ENCODE measurements at regions of chr3 and their contacts with region 1.

Region 1: DNA sequence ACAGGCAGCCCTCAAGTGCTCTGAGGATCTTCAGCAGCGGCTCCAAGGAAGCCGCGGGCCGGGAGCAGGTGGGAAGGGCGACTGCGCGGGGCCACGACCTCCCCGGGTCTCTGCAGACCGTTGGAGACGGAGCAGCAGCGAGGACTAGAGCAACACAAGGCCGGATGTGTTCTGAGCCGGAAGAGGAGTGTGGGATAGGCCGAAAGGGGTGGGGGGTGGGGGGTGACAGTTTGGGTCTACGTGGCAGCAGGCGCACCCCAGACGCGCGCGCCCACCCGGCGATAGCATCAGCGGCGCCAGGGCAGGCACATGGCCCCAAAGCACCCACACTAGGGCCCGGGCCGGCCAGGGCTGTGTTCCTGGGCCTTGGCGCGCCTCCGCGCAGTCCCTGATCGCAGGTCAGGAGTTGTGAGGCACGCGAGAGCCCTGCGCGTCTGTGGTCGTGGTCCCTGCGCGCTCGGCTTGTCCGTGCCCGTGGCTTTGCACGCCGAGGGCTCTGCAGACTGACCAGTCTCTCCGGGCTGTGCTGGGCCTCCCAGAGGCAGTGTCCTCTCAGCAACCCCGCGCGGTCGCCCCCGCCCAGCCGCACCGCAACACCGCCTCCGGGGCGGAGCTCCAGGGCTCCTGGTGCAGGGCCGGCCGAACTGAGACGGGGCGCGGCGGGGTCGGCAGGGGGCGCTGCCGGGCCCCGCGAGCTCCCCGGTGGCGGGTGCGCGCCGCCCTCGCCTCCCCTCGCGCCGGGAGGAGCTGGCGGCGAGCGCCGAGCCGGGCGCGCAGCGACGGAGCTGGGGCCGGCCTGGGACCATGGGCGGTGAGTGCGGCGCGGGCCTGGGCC is at the start of gene PXYLP1:
- DNase-seq: peak; percentile 96
- ATAC-seq: peak; percentile 95 to 97
- total RNA-seq, gene PXYLP1: 5.6 to 10.8 TPM

Region 2: DNA sequence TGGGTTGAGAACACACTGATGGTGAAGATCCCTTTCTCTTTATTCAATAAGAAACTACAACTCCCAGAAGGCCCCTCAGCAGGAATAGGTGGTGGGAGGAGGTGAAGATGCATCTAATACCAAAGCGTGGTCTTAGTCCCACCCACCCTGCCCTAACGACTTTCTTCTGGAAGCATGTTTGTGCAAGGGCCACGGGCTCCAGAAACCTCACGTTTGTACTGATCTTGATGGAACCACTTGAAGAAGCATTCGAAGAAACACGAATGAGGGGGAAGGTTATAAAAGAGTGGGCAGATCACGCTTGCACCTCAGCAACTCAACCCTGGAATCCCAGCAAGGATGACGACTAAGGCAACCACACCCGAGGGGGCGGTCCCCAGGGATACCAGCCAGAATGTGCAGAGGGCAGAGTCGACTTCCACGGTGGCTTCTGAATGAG is 300.3 kb before region 1 on chr3:
- intact Hi-C with region 1: no loop called
- DNase-seq: no peak
- ATAC-seq: peak in 1 of 2 donors; percentile 38

Region 3: DNA sequence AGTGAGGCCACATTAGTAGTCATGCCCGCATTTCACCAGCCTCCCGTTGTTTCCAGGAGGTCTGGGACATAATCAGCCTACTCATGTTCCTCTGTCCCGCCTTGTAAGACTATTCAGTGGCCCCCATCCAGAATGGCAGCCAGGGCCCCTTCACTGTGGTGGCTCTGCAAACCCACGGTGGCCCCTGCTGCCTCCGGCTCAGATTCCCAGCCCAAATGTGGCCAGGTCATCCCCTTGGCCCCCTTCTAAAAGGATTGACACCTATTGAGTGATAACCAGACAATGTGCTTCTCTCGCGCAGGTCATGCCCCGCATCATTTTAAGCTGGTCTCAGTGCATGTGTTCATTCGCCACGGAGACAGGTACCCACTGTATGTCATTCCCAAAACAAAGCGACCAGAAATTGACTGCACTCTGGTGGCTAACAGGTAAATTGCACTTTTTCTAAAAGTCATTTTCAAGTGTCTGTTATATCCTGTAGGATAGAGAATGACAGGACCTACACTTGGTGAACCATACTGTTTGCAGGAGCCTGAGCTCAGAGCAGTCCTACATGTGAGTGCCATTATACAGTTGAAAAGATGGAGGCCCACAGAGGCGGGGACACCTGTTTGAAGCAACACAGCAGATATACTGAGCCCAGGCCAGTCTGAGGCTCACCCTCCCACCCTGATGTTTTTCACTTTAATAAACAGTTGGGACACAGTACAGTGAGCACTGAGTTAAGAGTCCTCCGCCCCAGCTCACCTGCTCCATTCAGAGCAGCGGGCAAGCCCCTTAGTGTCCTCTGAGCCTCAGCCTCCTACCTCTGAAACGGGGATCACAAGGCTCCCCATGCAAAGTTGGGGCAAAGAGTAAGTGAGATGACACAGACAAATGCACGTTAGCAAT is 48.0 kb after region 1 on chr3:
- intact Hi-C with region 1: loop called (anchors 5 kb)
- DNase-seq: no peak
- ATAC-seq: peak; percentile 27 to 69

Region 4: GRCh38 chr3:141303481-141304223 is 72.3 kb after region 1 on chr3:
- intact Hi-C with region 1: loop called in 1 of 2 experiments (anchors 2 kb)
- DNase-seq: no peak
- ATAC-seq: peak; percentile 64 to 72

Region 5: DNA sequence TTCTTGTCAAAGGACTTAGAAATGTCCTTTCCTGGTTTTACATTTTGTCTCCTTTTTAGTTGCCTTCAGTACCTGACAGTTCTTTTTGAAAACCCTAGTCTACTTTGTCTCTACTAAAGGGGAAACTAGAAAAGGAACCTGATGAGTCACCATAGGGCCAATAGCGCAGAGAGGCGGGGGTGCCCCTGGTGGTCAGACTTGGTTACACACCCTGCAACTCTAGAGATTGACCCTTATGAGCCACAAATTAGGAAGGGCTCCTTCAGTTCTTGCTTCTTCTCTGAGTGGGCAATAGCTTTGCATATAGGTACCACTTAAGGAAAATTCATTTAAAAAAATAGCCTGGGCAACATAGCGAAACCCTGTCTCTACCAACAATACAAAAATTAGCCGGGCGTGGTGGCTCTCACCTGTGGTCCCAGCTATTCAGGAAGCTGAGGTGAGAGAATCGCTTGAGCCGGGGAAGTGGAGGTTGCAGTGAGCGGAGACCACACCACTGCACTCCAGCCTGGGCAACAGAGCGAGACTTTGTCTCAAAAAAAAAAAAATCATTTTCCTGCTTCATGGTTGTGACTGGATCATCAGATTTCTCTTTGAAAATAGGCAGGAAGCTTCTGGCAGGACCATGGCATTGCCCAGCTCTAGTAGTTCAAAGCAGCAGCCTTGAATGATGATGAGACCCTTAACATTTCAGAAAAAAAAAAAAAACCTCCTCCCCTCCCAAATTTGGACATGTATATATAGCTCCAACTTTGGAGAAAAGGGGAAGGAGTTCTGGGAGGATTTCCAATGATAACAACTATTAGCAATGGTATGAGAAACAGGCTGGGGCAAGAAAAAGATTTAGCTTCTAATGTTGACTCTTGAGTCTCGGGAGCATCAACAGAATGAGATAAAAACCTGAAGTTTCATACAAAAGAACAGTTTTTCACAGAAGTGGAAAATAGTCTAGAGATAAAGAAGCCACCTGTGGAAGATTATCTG is 210.4 kb after region 1 on chr3:
- intact Hi-C with region 1: loop called in 1 of 2 experiments (anchors 10 kb)
- DNase-seq: peak; percentile 78
- ATAC-seq: peak; percentile 83 to 85

Region 6: DNA sequence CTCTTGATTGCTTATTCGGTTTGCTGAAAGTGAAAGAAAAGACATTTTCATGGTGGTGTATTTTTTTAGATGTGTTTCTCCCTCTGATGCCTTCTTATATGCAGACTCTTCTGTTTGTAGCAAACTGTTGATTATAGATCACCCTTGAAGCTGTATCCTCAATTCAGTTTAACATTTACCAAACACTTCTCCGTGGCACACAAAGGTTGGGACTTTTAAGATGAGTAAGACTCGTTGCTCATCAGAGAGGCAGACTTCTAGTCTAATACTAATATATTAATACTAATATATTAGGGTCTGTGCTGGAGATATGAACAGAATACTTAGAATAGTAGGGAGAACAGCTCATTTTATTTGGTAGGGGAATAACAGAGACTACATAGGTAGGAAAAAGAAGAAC is 288.3 kb after region 1 on chr3:
- intact Hi-C with region 1: no loop called
- DNase-seq: no peak
- ATAC-seq: no peak

Region 7: DNA sequence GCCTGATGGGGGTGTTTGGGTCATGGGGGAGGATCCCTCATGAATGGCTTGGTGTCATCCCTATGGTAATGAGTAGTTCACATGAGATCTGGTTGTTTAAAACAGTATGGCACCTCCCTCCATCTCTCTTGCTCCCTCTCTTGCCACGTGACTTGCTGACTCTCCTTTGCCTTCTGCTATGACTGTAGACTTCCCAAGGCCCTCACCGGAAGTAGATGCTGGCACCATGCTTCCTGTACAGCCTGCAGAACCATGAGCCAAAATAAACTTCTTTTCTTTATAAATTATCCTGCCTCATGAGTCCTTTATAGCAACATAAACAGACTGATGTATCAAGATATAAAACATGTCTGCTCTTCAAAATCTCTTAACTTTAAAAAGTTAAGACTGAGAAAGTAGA is 821.9 kb after region 1 on chr3:
- intact Hi-C with region 1: no loop called
- DNase-seq: no peak
- ATAC-seq: no peak